ENCODE measurements at regions of chr6 and their contacts with region 1.

Region 1: GRCh38 chr6:155340464-155341129 is 26.3 kb upstream of the TFB1M start:
- DNase-seq: peak; percentile 23
- H3K4me3 Mint-ChIP-seq: no peak overlapping the region
- H3K27ac Mint-ChIP-seq: no peak overlapping the region
- H3K4me1 Mint-ChIP-seq: peaks cover 16% of the 10 kb centered on the region
- H3K27me3 Mint-ChIP-seq: no peaks in the 10 kb centered on the region
- CTCF ChIP-seq: no peak

Region 2: DNA sequence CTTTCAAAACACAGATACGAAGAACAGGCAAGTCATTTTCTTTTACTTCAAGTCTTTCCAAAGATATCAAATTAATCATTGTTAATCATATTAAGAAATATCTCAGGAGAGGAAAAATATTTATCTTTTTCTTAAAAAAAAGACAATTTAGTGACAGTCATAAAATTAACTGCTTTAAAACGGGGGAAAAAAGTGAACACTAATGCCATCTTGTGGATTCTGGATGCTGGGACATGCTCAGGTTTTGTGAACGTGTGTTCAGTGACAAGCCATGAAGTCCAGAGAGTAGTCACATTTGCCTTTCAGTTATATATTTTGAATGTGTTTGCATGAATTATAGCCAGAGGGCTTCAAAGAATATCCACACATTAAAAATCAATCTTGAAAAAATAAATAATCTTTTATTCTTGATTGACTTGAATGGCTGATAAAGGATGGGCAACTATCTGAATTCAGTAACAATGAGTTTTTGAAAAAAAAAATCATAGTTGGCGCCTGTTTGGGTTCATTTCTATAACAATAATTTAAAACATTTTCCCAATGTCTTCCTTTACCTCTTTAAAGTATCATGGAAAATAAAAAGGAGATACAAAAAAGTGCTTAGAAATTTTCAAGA is 189.7 kb after region 1 on chr6:
- CTCF ChIA-PET with region 1: interaction called, 5 read pairs
- intact Hi-C with region 1: loop called (anchors 2 kb)
- DNase-seq: peak; percentile 12
- H3K4me3 Mint-ChIP-seq: no peak overlapping the region
- H3K27ac Mint-ChIP-seq: no peak overlapping the region
- H3K4me1 Mint-ChIP-seq: peaks cover 8% of the 10 kb centered on the region
- H3K27me3 Mint-ChIP-seq: no peaks in the 10 kb centered on the region
- CTCF ChIP-seq: peak; percentile 41

Measured in Calu3 (cell line).